Endothelial cell of umbilical vein (primary cell): ENCODE measurements at regions of chr4 and their contacts with region 1.

Region 1: GRCh38 chr4:110510955-110511544 is 35.1 kb downstream of the ENPEP start:
- DNase-seq: peak; percentile 57
- H3K4me3 ChIP-seq: no peak overlapping the region
- H3K27ac ChIP-seq: no peak overlapping the region
- H3K4me1 ChIP-seq: peaks cover 10% of the 10 kb centered on the region
- H3K27me3 ChIP-seq: no peaks in the 10 kb centered on the region
- CTCF ChIP-seq: peak; percentile 31 to 40
- POLR2A ChIP-seq: no peak

Region 2: DNA sequence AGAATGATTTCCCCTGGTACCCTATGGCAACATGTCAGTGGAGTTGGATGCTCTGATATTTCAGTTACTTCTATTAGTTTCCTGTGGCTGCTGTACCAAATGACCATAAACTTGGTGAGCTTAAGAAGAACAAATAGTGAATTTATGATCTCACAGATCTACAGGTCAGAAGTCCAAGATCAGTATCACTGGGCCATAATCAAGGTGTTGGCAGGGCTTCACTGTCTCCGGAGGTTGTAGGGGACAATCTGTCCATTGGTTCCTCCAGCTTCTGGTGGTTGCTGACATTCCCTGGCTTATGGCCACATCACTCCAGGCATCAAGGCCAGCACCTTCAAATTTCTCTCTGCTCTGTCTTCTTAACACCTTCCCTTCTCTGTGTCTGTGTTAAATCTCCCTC is 274.7 kb before region 1 on chr4:
- CTCF ChIA-PET with region 1: no interaction called
- POLR2A ChIA-PET with region 1: no interaction called
- dilution Hi-C with region 1: no loop called
- intact Hi-C with region 1: no loop called
- DNase-seq: no peak
- H3K4me3 ChIP-seq: no peak overlapping the region
- H3K27ac ChIP-seq: no peak overlapping the region
- H3K4me1 ChIP-seq: no peaks in the 10 kb centered on the region
- H3K27me3 ChIP-seq: peaks cover 2% of the 10 kb centered on the region in 2 experiments
- CTCF ChIP-seq: no peak
- POLR2A ChIP-seq: no peak

Region 3: GRCh38 chr4:110310795-110311194 is 200.3 kb before region 1 on chr4:
- CTCF ChIA-PET with region 1: interaction called, 75 read pairs
- POLR2A ChIA-PET with region 1: no interaction called
- dilution Hi-C with region 1: no loop called
- intact Hi-C with region 1: loop called (anchors 1 kb)
- DNase-seq: no peak
- H3K4me3 ChIP-seq: no peak overlapping the region
- H3K27ac ChIP-seq: no peak overlapping the region
- H3K4me1 ChIP-seq: no peaks in the 10 kb centered on the region
- H3K27me3 ChIP-seq: no peaks in the 10 kb centered on the region
- CTCF ChIP-seq: no peak
- POLR2A ChIP-seq: no peak

Region 4: GRCh38 chr4:110344162-110344561 is 166.9 kb before region 1 on chr4:
- CTCF ChIA-PET with region 1: interaction called, 44 read pairs
- POLR2A ChIA-PET with region 1: no interaction called
- dilution Hi-C with region 1: no loop called
- intact Hi-C with region 1: no loop called
- DNase-seq: no peak
- H3K4me3 ChIP-seq: no peak overlapping the region
- H3K27ac ChIP-seq: no peak overlapping the region
- H3K4me1 ChIP-seq: no peaks in the 10 kb centered on the region
- H3K27me3 ChIP-seq: no peaks in the 10 kb centered on the region
- CTCF ChIP-seq: no peak
- POLR2A ChIP-seq: no peak

Region 5: GRCh38 chr4:110487873-110488272 is 23.2 kb before region 1 on chr4:
- CTCF ChIA-PET with region 1: interaction called, 11 read pairs
- POLR2A ChIA-PET with region 1: no interaction called
- dilution Hi-C with region 1: no loop called
- intact Hi-C with region 1: no loop called
- DNase-seq: no peak
- H3K4me3 ChIP-seq: no peak overlapping the region
- H3K27ac ChIP-seq: no peak overlapping the region
- H3K4me1 ChIP-seq: no peaks in the 10 kb centered on the region
- H3K27me3 ChIP-seq: peaks cover 0 to under 1% of the 10 kb centered on the region in 2 experiments
- CTCF ChIP-seq: no peak
- POLR2A ChIP-seq: no peak